ENCODE measurements at regions of chr20 and their contacts with region 1.

Region 1: GRCh38 chr20:9051508-9051907 is 17.4 kb upstream of the PLCB4 start:
- DNase-seq: no peak
- H3K4me3 Mint-ChIP-seq: no peak overlapping the region
- H3K27ac Mint-ChIP-seq: no peak overlapping the region
- H3K4me1 Mint-ChIP-seq: no peaks in the 10 kb centered on the region
- H3K27me3 Mint-ChIP-seq: no peaks in the 10 kb centered on the region

Region 2: DNA sequence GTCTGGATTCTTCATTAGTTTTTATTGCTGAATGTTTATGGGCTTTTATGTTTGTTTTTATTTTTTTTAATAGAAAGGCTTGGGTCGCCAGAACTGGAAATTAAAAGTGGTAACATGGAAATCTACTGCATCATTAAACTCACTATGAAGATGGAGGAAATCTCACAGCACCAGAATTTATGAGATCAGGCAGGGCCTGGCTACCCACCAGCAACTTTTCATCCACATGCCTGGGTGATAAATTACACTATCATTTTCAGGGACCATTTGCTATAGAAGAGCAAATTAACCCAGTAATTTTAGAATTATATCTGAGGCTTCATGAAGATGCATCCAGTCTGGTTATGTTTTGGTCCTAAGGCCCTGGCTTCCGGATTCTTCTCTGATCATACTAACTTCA is 40.4 kb before region 1 on chr20:
- CTCF ChIA-PET with region 1: no interaction called
- intact Hi-C with region 1: loop called (anchors 1 kb)
- DNase-seq: no peak
- H3K4me3 Mint-ChIP-seq: no peak overlapping the region
- H3K27ac Mint-ChIP-seq: no peak overlapping the region
- H3K4me1 Mint-ChIP-seq: no peaks in the 10 kb centered on the region
- H3K27me3 Mint-ChIP-seq: no peaks in the 10 kb centered on the region

Region 3: DNA sequence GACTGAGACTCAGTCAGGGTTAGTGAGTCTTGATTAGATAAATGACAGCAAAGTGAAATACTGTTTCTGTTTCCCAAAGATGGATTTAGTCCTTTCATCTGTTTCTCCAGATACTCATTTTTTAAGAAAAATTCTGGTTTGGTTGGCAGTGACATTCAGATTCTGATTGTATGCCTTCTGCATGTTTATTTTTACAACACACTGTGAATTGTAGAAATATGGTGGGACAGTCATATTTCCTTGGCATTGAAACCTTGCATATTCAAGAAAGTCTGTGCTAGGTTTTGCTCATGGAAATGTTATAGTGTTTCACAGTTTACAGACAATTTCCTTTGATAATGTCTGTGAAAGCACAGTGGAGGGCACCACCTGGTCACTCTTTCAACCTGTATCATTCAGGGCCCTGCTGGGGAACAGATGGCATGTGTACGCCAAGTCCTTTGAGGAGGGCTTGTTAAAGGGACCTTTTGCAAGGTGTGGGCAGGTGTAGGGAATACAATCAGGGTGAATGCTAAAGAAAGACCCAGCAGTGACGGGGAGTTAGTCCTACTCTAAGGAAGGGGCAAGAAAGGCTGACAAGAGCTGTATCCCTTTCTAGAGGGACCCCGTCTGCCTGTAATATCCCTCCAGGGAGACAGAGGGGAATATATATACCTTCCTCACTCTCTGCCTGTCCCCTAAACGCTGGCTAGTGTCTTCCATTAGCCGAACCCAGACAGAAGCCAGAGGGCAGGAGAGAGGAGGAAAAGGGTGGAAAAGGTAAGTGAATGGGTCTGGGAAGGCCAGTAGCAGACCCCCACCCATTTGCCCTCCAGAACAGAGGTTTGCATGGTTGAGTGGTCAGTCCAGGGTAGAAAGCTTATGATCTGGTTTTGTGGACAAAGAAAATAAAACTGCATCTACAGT is 27.6 kb after region 1 on chr20:
- CTCF ChIA-PET with region 1: no interaction called
- intact Hi-C with region 1: no loop called
- DNase-seq: no peak
- H3K4me3 Mint-ChIP-seq: no peak overlapping the region
- H3K27ac Mint-ChIP-seq: no peak overlapping the region
- H3K4me1 Mint-ChIP-seq: no peaks in the 10 kb centered on the region
- H3K27me3 Mint-ChIP-seq: no peaks in the 10 kb centered on the region

Region 4: GRCh38 chr20:9215539-9215938 is 164.0 kb after region 1 on chr20:
- CTCF ChIA-PET with region 1: no interaction called
- intact Hi-C with region 1: no loop called
- DNase-seq: no peak
- H3K4me3 Mint-ChIP-seq: no peak overlapping the region
- H3K27ac Mint-ChIP-seq: no peak overlapping the region
- H3K4me1 Mint-ChIP-seq: no peaks in the 10 kb centered on the region
- H3K27me3 Mint-ChIP-seq: no peaks in the 10 kb centered on the region

Region 5: DNA sequence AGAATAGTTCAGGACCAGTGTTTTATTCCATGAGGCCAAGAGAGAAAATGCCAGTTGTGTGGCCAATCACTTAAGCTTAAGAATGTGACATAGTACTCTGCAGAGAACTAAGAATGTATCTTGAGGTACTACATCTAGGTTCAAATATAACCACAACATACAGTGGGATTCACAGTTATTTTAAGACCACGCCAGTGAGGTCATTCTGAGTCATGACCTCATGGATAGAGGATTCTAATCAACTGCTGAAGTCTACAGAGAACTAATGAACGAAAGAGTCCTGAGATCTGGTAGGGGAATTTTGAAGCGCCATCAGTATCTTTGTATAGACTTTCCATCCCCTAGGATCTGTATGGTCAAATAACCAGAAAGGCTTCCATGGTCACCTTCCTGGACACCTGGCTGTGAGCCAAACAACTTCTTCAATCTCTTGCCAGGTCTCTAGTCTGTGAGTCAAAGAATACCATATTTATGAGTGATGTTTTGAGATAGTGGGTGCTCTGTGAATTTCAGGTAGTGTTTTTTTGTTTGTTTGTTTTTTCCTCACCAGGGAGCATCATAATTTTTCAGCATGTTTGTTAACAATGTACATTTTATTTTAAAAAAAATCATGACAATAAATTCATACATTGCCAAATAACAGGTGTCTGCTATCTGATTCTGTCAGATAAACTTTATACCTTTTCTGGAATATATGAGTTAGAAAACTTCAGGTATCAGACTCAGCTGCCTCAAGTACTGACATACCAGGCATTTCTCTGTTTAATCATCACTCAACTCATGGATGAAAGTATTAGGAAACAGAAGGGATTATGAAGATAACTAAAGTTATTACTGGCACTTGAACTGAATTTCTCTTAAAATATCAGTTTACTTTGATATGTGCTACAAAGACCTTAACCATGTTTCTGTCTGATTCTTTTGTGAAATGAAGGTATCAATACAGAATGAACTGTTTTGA is 235.3 kb after region 1 on chr20:
- CTCF ChIA-PET with region 1: no interaction called
- intact Hi-C with region 1: no loop called
- DNase-seq: no peak
- H3K4me3 Mint-ChIP-seq: no peak overlapping the region
- H3K27ac Mint-ChIP-seq: no peak overlapping the region
- H3K4me1 Mint-ChIP-seq: no peaks in the 10 kb centered on the region
- H3K27me3 Mint-ChIP-seq: no peaks in the 10 kb centered on the region

Region 6: DNA sequence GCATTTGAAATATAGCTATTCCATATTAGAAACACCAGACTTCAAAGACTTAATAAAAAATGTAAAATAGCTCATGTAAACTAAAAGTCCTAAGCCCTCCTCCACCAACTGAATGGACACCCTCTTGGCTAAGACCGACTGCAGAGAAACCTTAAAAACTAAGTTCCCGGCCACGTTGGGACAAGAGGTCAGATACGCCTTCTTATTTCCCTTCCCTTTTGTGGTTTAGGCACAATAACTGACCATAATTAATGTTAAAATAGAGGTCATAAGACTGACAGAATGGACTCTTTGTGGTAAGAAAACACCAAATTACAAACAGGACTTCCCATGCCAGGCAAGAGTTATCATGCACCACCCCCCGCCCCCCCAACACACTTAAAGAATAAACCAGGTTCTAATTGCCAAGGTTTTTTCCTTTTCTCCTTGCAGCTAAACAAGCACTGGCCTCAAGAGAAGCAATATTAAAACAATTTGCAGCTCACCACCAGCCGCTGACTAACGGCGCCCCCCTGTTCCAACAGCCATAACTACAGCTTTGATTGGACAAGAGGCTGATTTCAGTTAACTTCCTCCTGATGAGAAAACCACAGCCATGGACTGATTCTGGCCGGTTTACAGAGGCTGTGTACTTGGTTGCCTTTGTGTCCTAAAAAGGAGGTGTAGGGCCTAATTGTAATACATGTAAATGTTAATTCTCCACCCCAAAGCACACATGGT is 452.2 kb after region 1 on chr20:
- CTCF ChIA-PET with region 1: no interaction called
- intact Hi-C with region 1: no loop called
- DNase-seq: no peak
- H3K4me3 Mint-ChIP-seq: no peak overlapping the region
- H3K27ac Mint-ChIP-seq: no peak overlapping the region
- H3K4me1 Mint-ChIP-seq: no peaks in the 10 kb centered on the region
- H3K27me3 Mint-ChIP-seq: peaks cover 26% of the 10 kb centered on the region